ENCODE measurements at regions of chr10 and their contacts with region 1.

Region 1: DNA sequence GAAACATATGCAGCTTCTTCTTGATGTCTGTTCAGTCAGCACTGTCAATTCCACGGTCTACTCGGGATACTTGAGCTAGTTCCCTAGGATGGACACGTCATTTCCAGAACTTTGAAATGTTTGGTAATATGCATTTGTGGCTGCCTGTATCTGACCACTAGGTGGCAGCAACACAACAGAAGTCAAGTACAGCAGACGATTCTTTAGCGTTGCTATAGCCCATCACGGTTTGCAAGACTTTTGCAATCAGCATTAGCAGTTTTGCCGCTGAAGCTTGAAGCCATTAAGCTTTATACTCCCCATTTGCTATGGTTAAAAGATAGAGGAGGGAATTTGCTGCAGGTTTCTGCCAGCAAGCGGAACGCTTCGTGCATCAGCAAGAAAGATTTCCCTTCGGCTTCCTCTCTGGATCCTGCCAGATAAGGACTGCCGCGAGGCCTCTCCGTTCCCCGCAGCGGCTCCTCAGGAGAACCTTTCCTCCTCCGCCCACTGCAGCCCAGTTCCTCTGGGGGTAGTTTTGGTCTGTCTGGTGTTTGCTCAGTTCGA is 63.5 kb downstream of the ABCC2 start:
- DNase-seq: peak; percentile 59
- H3K4me3 Mint-ChIP-seq: no peak overlapping the region
- H3K27ac Mint-ChIP-seq: no peak overlapping the region
- H3K4me1 Mint-ChIP-seq: peaks cover 11% of the 10 kb centered on the region
- H3K27me3 Mint-ChIP-seq: no peaks in the 10 kb centered on the region

Region 2: DNA sequence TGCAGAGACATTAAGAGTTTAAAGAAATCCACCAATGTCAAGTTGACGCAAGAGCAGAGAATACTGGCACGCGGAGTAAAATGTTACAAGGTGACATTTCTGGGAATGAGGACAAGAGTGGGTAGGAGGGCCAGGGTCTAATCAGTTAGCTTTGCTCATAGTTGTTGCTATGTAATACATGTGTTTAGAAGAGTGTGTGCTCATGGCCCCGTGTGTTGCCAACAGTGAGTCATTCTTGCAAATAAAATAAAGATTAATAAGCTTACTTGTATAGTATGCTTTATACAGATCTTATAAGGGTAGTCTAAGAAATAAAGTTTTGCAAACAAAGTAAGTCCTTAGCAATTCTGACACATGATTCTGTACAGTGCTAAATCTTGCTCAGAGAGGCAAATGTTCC is 99.4 kb after region 1 on chr10:
- intact Hi-C with region 1: no loop called
- DNase-seq: no peak
- H3K4me3 Mint-ChIP-seq: no peak overlapping the region
- H3K27ac Mint-ChIP-seq: no peak overlapping the region
- H3K4me1 Mint-ChIP-seq: no peaks in the 10 kb centered on the region
- H3K27me3 Mint-ChIP-seq: no peaks in the 10 kb centered on the region

Region 3: DNA sequence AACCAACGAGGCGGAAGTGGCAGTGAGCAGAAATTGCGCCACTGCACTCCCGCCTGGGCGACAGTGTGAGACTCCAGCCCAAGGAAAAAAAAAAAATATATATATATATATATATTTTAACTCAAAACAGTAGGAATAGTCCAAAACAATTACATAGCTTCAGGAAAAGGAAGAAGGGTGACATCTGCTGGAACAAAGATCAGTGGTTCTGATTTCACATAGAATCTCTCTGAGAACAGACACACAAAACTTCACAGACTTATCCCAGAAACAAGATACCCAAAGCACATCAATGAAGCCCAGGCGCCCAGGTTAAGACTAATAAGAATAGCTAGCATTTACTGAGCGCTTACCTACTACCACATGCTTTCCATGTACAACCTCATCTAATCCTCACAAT is 118.9 kb after region 1 on chr10:
- intact Hi-C with region 1: loop called (anchors 2 kb)
- DNase-seq: no peak
- H3K4me3 Mint-ChIP-seq: no peak overlapping the region
- H3K27ac Mint-ChIP-seq: no peak overlapping the region
- H3K4me1 Mint-ChIP-seq: no peaks in the 10 kb centered on the region
- H3K27me3 Mint-ChIP-seq: no peaks in the 10 kb centered on the region

Region 4: GRCh38 chr10:100046021-100046486 is 200.1 kb after region 1 on chr10:
- intact Hi-C with region 1: loop called (anchors 1 kb)
- DNase-seq: peak; percentile 57
- H3K4me3 Mint-ChIP-seq: no peak overlapping the region
- H3K27ac Mint-ChIP-seq: no peak overlapping the region
- H3K4me1 Mint-ChIP-seq: no peaks in the 10 kb centered on the region
- H3K27me3 Mint-ChIP-seq: peaks cover 12% of the 10 kb centered on the region

Region 5: DNA sequence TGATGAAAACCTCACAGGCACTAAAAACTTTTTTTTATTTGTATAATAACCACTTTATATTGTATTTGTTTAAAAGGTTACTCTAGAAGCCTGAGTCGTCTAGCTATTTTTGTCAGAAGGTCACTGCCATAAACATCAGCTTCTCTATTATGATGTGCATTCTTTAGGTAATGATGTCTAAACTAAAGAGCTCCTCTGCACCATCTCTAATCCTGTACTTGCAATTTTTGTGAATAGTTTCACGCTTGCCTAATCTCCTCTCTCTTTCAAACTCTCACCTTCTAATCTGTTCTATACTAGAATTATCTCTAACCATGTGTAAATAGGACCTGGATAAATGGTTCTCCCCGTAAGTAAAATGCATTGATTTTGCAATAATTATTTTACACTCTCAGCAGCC is 393.9 kb after region 1 on chr10:
- intact Hi-C with region 1: loop called (anchors 5 kb)
- DNase-seq: no peak
- H3K4me3 Mint-ChIP-seq: no peak overlapping the region
- H3K27ac Mint-ChIP-seq: no peak overlapping the region
- H3K4me1 Mint-ChIP-seq: peaks cover 11% of the 10 kb centered on the region
- H3K27me3 Mint-ChIP-seq: no peaks in the 10 kb centered on the region

Measured in activated T-helper 1 cell treated with anti-CD3 and anti-CD28 coated beads, Interleukin-12 subunit alpha, Interleukin-12 subunit beta, Interleukin-2, Interleukin-4 antibody, amounts not matched to agents 30 ng/mL and 10 ng/mL and 1 ng/mL, durations not matched to agents 14 hours and 24 hours and 36 hours (primary cell).